Left lung (tissue), 14 donors: ENCODE measurements at regions of chr15 and their contacts with region 1.

Region 1: GRCh38 chr15:66603301-66604179 is 37.7 kb upstream of the LCTL start:
- DNase-seq: peak; percentile 67 to 94 (median 77)
- ATAC-seq: peak; percentile 96
- H3K4me3 ChIP-seq: no peak overlapping the region
- H3K27ac ChIP-seq: no peak overlapping the region
- H3K4me1 ChIP-seq: no peaks in the 10 kb centered on the region
- H3K27me3 ChIP-seq: no peaks in the 10 kb centered on the region
- CTCF ChIP-seq: peak; percentile 76

Region 2: GRCh38 chr15:66851226-66852071 is 247.9 kb after region 1 on chr15:
- intact Hi-C with region 1: loop called in 1 of 2 experiments (anchors 5 kb)
- DNase-seq: peak; percentile 81 to 97 (median 88)
- ATAC-seq: peak; percentile 98
- H3K4me3 ChIP-seq: no peak overlapping the region
- H3K27ac ChIP-seq: no peak overlapping the region
- H3K4me1 ChIP-seq: peaks cover 5 to 18% of the 10 kb centered on the region in 2 donors
- H3K27me3 ChIP-seq: no peaks in the 10 kb centered on the region
- CTCF ChIP-seq: peak; percentile 98